Dendritic cell treated with granulocyte-macrophage colony-stimulating factor and Interleukin-4, amounts not matched to agents 40 ng/mL and 50 ng/mL, for 4 days (primary cell): ENCODE measurements at regions of chr10 and their contacts with region 1.

Region 1: GRCh38 chr10:84333864-84334451 is 5.6 kb downstream of the CCSER2 start:
- H3K4me3 Mint-ChIP-seq: no peak overlapping the region
- H3K27ac Mint-ChIP-seq: no peak overlapping the region
- H3K4me1 Mint-ChIP-seq: peaks cover 39% of the 10 kb centered on the region
- H3K27me3 Mint-ChIP-seq: no peaks in the 10 kb centered on the region

Region 2: GRCh38 chr10:84139126-84140035 is 194.6 kb before region 1 on chr10 and contains the start of gene GHITM:
- intact Hi-C with region 1: loop called (anchors 10 kb)
- H3K4me3 Mint-ChIP-seq: peak within 1 kb of the TSS; percentile 95
- H3K27ac Mint-ChIP-seq: peak within 1 kb of the TSS; percentile 98
- H3K4me1 Mint-ChIP-seq: peaks cover 17% of the 10 kb centered on the region
- H3K27me3 Mint-ChIP-seq: peaks cover 18% of the 10 kb centered on the region

Region 3: GRCh38 chr10:84172467-84173356 is 161.2 kb before region 1 on chr10:
- intact Hi-C with region 1: no loop called
- H3K4me3 Mint-ChIP-seq: no peak overlapping the region
- H3K27ac Mint-ChIP-seq: peak overlapping the region; percentile 51
- H3K4me1 Mint-ChIP-seq: peaks cover 7% of the 10 kb centered on the region
- H3K27me3 Mint-ChIP-seq: no peaks in the 10 kb centered on the region

Region 4: GRCh38 chr10:84521013-84521412 is 187.1 kb after region 1 on chr10:
- intact Hi-C with region 1: no loop called
- H3K4me3 Mint-ChIP-seq: no peak overlapping the region
- H3K27ac Mint-ChIP-seq: no peak overlapping the region
- H3K4me1 Mint-ChIP-seq: no peaks in the 10 kb centered on the region
- H3K27me3 Mint-ChIP-seq: peaks cover 1% of the 10 kb centered on the region